Right ventricle myocardium inferior (tissue), 1 donor: ENCODE measurements at regions of chr12 and their contacts with region 1.

Region 1: DNA sequence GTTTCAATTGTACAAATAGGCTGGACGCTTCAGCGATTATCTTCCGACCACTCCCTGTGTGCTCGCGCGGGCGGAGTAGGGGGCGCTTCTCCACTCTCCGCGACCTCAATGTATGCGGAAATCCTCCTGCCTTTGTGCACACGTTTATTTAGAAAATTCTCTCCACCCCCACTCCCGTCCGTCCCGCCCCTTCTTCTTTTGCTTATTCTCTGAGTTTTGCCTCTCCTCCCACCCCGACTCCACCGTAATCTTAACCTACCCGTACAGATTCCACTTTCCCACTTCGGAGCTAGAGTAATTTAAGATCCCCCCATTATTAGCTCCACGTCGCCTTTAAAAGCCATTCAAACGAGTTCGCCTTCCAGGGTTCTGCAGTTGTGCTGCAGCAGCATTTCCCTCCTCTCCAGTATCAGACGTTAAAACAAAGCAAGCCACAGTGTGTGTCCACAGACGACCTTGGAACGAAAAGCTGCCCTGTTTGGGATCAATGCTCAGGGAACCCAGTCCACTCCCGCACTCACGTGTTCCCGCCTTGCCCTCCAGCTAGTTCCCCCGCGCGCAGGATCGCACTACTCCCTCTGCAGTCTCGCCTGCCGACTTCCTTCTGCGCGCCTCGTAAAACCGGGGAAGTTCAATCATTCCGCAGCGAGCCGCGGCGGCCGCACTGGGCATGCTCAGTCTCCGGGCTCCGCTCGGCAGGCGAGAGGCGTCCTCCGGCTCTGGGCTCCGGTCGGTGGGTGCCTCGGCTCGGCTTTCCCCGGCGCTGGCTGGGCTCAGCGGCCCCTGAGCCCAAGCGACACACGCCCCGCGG is at the start of gene ANO6:
- DNase-seq: peak; percentile 96
- ATAC-seq: peak; percentile 95
- total RNA-seq, gene ANO6: 49.0 TPM

Region 2: GRCh38 chr12:45183246-45183645 is 32.4 kb before region 1 on chr12:
- intact Hi-C with region 1: loop called (anchors 5 kb)
- DNase-seq: no peak
- ATAC-seq: no peak

Region 3: DNA sequence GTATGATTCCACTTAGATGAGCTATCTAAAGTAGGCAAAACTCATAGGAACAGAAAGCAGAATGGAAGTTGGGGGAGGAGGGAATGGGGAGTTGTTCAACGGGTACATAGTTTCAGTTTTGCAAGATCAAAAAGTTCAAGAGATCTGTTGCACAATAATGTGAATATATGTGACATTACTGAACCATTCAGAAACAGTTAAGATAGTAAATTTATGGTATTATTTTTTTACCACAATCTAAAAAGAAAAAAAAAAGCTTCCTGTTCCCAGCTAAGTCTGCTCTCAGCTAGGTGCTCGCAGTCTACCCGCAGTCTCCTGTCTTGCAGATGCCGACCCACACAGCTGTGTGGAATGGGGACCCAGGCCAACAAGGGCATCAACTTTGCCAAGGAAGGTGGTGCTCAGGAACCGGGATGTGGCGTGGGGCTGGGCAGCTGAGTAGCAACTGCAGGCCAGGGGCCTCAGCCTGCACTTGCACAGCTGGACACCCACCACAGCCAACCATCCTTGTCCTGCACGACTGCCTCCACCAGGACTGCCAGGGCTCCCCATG is 15.1 kb before region 1 on chr12:
- intact Hi-C with region 1: no loop called
- DNase-seq: no peak
- ATAC-seq: no peak

Region 4: DNA sequence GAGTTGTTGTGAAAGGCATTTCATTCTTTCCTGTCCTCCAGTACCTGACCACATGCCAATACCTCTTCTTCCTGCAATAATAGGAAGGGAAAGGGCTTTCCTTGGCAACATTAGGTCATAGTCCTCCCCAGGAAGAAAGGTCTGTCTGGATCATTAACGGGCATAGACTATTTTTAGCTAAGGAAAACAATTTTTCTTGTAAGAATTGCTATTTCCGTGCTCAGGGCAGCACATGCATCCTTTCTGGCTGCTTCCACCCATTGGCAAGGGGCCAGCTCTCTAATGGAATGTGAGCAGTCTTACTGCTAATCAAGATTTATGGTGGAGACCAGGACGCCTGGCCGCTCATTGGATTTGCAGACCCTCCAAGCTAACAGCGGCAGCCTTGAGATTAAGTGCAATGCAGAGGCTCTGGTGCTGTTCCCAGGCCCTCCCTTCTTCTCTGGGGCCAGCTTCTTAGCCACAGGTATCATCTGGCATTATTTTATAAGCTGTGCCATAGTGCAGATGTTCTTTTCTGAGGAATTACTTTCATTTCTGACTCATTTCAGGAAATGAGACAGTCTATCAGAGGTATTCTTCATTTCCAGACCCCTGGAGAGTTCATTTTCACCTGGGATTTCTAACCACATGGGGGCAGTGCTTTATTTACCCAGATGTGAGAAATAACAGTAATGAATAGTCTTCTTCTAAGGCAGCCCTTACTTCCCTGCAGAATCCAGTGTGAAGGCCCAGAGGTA is 53.2 kb after region 1 on chr12:
- intact Hi-C with region 1: loop called (anchors 1 kb)
- DNase-seq: peak; percentile 84
- ATAC-seq: peak; percentile 42

Region 5: GRCh38 chr12:45388545-45388944 is 172.9 kb after region 1 on chr12:
- intact Hi-C with region 1: loop called (anchors 5 kb)
- DNase-seq: no peak
- ATAC-seq: no peak

Region 6: GRCh38 chr12:45728630-45729232 is 513.1 kb after region 1 on chr12:
- intact Hi-C with region 1: loop called (anchors 5 kb)
- DNase-seq: peak; percentile 98
- ATAC-seq: peak; percentile 87